ENCODE measurements at regions of chr2 and their contacts with region 1.

Region 1: GRCh38 chr2:224561234-224562005 is 23.7 kb downstream of the CUL3 start:
- DNase-seq: no peak
- ATAC-seq: no peak
- H3K4me3 ChIP-seq: no peak overlapping the region
- H3K4me3 Mint-ChIP-seq: no peak overlapping the region
- H3K27ac ChIP-seq: no peak overlapping the region
- H3K27ac Mint-ChIP-seq: no peak overlapping the region
- H3K4me1 ChIP-seq: peaks cover 28% of the 10 kb centered on the region
- H3K4me1 Mint-ChIP-seq: peaks cover 14% of the 10 kb centered on the region
- H3K27me3 ChIP-seq: no peaks in the 10 kb centered on the region
- H3K27me3 Mint-ChIP-seq: no peaks in the 10 kb centered on the region
- CTCF ChIP-seq: no peak

Region 2: GRCh38 chr2:224532931-224533330 is 28.5 kb before region 1 on chr2:
- CTCF ChIA-PET with region 1: no interaction called
- POLR2A ChIA-PET with region 1: no interaction called
- intact Hi-C with region 1: no loop called
- DNase-seq: no peak
- ATAC-seq: no peak
- H3K4me3 ChIP-seq: no peak overlapping the region
- H3K4me3 Mint-ChIP-seq: no peak overlapping the region
- H3K27ac ChIP-seq: no peak overlapping the region
- H3K27ac Mint-ChIP-seq: peak overlapping the region; percentile 22
- H3K4me1 ChIP-seq: peaks cover 6% of the 10 kb centered on the region
- H3K4me1 Mint-ChIP-seq: peaks cover 62% of the 10 kb centered on the region
- H3K27me3 ChIP-seq: no peaks in the 10 kb centered on the region
- H3K27me3 Mint-ChIP-seq: no peaks in the 10 kb centered on the region
- CTCF ChIP-seq: no peak

Region 3: DNA sequence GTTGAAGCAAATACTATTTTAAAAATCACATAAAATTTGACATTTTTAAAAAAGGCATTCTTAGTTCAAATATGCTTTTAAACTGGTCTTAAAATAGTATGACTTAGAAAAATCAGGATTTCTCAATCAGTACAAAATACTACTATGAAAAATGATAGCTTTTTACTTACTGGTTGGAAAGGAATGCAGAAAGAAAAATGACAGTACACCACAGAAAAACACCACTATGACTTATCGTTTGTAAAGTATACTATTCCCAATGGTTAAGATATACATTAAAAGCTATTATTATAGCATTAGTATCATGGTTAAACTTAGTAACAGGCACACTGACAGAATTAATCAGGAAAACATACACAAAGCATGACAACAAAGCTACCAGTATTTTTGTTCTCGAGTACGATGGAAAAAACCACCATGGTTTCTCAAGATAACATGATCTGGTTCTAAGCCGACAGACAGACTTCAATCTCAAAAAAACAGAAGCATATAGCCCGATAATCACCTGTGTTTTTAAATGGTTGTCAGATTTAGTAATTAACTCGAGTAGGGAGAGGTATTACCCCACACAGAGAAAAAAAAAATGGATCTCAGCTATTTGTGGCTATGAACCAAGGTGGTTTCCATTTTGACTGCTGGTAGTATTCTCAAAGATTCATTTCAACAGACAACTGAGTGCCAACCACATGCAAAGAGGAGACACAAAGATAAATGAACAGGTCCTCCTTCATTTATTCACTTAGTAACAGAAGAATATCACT is 15.4 kb before region 1 on chr2:
- CTCF ChIA-PET with region 1: interaction called, 7 read pairs
- POLR2A ChIA-PET with region 1: interaction called, 11 read pairs
- intact Hi-C with region 1: loop called in 1 of 2 experiments (anchors 2 kb)
- DNase-seq: no peak
- ATAC-seq: no peak
- H3K4me3 ChIP-seq: no peak overlapping the region
- H3K4me3 Mint-ChIP-seq: no peak overlapping the region
- H3K27ac ChIP-seq: no peak overlapping the region
- H3K27ac Mint-ChIP-seq: peak overlapping the region; percentile 1
- H3K4me1 ChIP-seq: peaks cover 6% of the 10 kb centered on the region
- H3K4me1 Mint-ChIP-seq: peaks cover 58% of the 10 kb centered on the region
- H3K27me3 ChIP-seq: no peaks in the 10 kb centered on the region
- H3K27me3 Mint-ChIP-seq: no peaks in the 10 kb centered on the region
- CTCF ChIP-seq: no peak

Region 4: DNA sequence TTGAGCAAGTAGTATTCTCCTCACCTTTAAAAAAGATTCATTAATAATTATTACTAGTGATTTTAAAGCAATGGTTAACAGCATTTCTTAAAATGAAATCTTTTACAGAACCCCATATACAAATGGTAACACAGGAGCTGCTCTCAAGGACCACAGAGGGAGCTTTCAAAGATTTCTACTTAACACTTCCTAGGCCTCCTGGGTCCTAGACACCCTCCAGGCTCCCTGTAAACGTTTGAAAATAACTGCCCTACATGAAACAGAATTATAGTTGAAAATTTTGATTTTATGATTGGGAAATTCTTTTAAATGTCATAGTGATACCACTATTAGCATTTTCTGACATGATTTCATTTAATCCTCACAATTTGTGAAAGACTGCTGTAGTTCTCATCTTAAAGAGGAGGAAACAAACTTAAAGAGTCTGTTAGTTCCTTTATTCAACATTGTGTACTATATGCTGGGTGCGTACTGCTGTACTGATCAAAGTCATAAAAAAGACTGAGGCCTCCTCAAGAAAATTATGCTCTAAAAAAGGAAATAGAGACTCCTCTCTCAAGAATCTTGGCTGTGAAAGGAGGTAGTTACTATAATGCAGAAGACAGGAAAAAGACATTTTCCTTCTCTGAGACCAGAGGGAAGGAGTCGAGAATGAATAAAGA is 13.1 kb after region 1 on chr2:
- CTCF ChIA-PET with region 1: interaction called, 4 read pairs
- POLR2A ChIA-PET with region 1: interaction called, 3 read pairs
- intact Hi-C with region 1: loop called in 1 of 2 experiments (anchors 2 kb)
- DNase-seq: no peak
- ATAC-seq: peak; percentile 63
- H3K4me3 ChIP-seq: peak overlapping the region; percentile 0
- H3K4me3 Mint-ChIP-seq: peak overlapping the region; percentile 62
- H3K27ac ChIP-seq: no peak overlapping the region
- H3K27ac Mint-ChIP-seq: peak overlapping the region; percentile 4
- H3K4me1 ChIP-seq: peaks cover 32% of the 10 kb centered on the region
- H3K4me1 Mint-ChIP-seq: peaks cover 100% of the 10 kb centered on the region
- H3K27me3 ChIP-seq: no peaks in the 10 kb centered on the region
- H3K27me3 Mint-ChIP-seq: no peaks in the 10 kb centered on the region
- CTCF ChIP-seq: no peak